GM12878 (cell line): ENCODE measurements at regions of chr6 and their contacts with region 1.

Region 1: DNA sequence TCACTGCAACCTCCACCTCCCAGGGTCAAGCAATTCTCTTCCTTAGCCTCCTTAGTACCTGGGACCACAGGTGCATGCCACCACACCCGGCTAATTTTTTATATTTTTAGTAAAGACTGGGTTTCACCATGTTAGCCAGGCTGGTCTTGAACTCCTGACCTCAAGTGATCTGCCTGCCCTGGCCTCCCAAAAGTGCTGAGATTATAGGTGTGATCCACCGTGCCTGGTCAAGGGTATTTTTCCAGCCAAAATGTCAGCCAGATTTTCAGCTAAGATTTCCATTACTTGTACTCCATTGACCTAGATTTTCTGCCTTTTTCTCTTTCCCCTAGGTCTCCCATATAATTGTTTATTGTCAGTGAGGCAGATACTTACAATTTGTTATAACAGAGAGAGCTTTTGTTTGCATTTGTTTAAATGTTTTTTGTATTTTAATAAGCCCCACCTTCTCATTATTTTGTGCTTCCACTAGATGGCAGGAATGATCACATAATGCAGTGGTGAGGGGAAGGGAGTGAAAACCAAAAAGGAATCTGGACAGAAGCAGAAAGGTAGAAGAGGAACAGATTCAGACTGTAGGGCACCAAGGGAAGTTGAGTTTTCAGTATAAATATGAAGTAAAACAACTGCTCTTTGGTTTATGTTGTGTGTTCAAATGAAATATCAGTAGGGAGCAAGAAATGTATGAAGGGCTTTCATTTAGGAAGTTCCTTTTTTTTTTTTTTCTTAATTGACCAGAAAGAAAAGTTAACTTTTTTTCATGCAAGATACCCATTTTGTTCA is 29.7 kb downstream of the RPF2 start:
- DNase-seq: peak; percentile 15
- ATAC-seq: peak; percentile 90
- H3K4me3 ChIP-seq: no peak overlapping the region
- H3K27ac ChIP-seq: no peak overlapping the region
- H3K4me1 ChIP-seq: no peaks in the 10 kb centered on the region
- H3K27me3 ChIP-seq: no peaks in the 10 kb centered on the region
- CTCF ChIP-seq: peak; percentile 51 to 75 (median 53); a peak in 5 of 6 replicates
- EP300 ChIP-seq: no peak
- POLR2A ChIP-seq: no peak
- RAD21 ChIP-seq: peak; percentile 93

Region 2: GRCh38 chr6:110981202-110981600 is 30.4 kb before region 1 on chr6:
- CTCF ChIA-PET with region 1: interaction called, 16 read pairs
- POLR2A ChIA-PET with region 1: no interaction called
- RAD21 ChIA-PET with region 1: interaction called, 3 read pairs
- SMC1A ChIA-PET with region 1: interaction called, 5 read pairs
- in situ Hi-C with region 1: no loop called
- intact Hi-C with region 1: no loop called
- DNase-seq: no peak
- ATAC-seq: peak; percentile 16; the same call in 2 of the 3 replicates
- H3K4me3 ChIP-seq: peak overlapping the region; percentile 84
- H3K27ac ChIP-seq: peak overlapping the region; percentile 82
- H3K4me1 ChIP-seq: no peaks in the 10 kb centered on the region
- H3K27me3 ChIP-seq: no peaks in the 10 kb centered on the region
- CTCF ChIP-seq: no peak
- EP300 ChIP-seq: no peak
- POLR2A ChIP-seq: no peak
- RAD21 ChIP-seq: no peak

Region 3: DNA sequence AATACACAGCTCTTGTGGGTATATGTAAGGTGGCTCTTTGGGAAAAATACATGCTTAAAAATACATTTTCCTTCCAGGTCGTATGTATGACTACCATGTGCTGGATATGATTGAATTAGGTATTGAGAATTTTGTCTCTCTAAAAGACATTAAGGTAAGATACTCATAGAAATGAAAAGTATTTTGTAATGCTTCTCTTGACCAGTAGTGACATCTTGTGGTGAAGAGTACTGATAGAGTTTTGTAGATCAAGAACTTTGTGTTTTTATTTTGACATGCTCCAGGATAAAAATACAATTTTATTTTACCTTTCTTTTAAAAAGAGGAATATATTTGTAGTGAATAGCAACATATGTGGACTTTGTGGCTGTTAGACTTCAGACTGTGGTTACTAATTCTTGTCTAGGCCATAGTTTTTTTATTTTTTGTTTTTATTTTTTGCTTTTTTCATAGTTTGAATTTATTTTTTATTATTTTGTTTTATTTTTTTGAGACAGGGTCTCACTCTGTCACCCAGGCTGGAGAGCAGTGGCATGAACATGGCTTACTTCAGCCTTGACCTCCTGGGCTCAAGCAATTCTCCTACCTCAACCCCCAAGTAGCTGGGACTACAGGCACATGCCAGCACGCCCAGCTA is 11.8 kb before region 1 on chr6:
- CTCF ChIA-PET with region 1: interaction called, 10 read pairs
- POLR2A ChIA-PET with region 1: no interaction called
- RAD21 ChIA-PET with region 1: no interaction called
- SMC1A ChIA-PET with region 1: interaction called, 3 read pairs
- in situ Hi-C with region 1: no loop called
- intact Hi-C with region 1: no loop called
- DNase-seq: no peak
- ATAC-seq: peak; percentile 52
- H3K4me3 ChIP-seq: no peak overlapping the region
- H3K27ac ChIP-seq: no peak overlapping the region
- H3K4me1 ChIP-seq: no peaks in the 10 kb centered on the region
- H3K27me3 ChIP-seq: no peaks in the 10 kb centered on the region
- CTCF ChIP-seq: peak in 2 of 3 experiments; percentile 13 to 26; a peak in 2 of 6 replicates
- EP300 ChIP-seq: no peak
- POLR2A ChIP-seq: no peak
- RAD21 ChIP-seq: peak; percentile 55

Region 4: DNA sequence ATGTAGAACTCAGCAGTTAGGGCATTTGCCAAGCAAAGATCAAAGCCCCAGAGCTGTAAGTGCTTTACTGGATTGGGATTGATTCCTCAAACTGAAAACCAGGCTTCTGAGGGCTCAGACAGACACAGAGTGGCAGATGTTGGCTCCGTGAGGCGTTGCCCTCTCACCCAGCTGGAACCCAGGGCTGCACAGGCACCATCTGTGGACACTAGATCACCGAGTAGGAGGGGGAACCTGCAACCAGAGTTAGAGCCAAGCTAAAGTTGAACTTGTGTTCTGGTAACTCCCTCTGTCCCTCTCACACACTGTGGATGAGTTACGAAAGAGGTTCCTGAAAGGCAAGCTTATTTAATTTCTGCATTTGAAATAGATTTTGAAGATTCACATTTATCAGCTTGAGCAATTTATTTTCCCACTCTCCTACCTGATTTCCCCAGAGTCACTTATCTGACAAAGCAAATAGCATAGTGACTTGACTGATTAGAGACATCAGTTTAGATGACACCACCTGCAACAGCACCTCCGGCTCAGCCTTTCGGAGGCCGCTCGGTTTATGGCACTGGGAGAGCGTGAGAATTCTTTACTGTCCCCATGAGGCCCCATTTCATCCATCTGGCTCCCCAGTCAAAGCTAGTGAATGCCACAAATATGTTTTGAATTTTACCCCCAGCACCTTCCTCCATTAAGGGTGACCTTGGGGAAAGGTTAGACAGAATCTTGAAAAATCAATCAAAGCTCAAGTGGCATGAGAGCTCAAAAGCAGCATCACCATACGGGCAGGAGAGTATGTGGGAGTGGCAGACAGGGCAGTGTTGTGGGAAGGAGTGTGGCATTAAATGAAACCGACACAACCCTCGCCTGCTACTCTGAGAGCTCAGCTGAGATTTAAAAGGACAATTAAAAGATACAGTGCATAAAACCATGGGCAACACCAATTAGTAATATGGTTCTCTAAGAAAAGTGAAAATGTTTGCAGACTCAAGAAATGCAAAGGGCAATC is 18.8 kb after region 1 on chr6:
- CTCF ChIA-PET with region 1: interaction called, 21 read pairs
- POLR2A ChIA-PET with region 1: no interaction called
- RAD21 ChIA-PET with region 1: no interaction called
- SMC1A ChIA-PET with region 1: interaction called, 11 read pairs
- in situ Hi-C with region 1: no loop called
- intact Hi-C with region 1: no loop called
- DNase-seq: no peak
- ATAC-seq: no peak
- H3K4me3 ChIP-seq: no peak overlapping the region
- H3K27ac ChIP-seq: no peak overlapping the region
- H3K4me1 ChIP-seq: no peaks in the 10 kb centered on the region
- H3K27me3 ChIP-seq: no peaks in the 10 kb centered on the region
- CTCF ChIP-seq: no peak
- EP300 ChIP-seq: no peak
- POLR2A ChIP-seq: no peak
- RAD21 ChIP-seq: no peak

Region 5: GRCh38 chr6:111057074-111057752 is 45.7 kb after region 1 on chr6:
- CTCF ChIA-PET with region 1: interaction called, 4 read pairs
- POLR2A ChIA-PET with region 1: no interaction called
- RAD21 ChIA-PET with region 1: interaction called, 5 read pairs
- SMC1A ChIA-PET with region 1: interaction called, 11 read pairs
- in situ Hi-C with region 1: no loop called
- intact Hi-C with region 1: no loop called
- DNase-seq: no peak
- ATAC-seq: peak; percentile 96
- H3K4me3 ChIP-seq: no peak overlapping the region
- H3K27ac ChIP-seq: no peak overlapping the region
- H3K4me1 ChIP-seq: no peaks in the 10 kb centered on the region
- H3K27me3 ChIP-seq: no peaks in the 10 kb centered on the region
- CTCF ChIP-seq: peak; percentile 73 to 90 (median 86)
- EP300 ChIP-seq: no peak
- POLR2A ChIP-seq: no peak
- RAD21 ChIP-seq: peak; percentile 79